Right ventricle myocardium inferior (tissue), 1 donor: ENCODE measurements at regions of chr18 and their contacts with region 1.

Region 1: GRCh38 chr18:13611601-13612195 is 114.7 kb downstream of the FAM210A start:
- DNase-seq: peak; percentile 78
- ATAC-seq: peak; percentile 88

Region 2: DNA sequence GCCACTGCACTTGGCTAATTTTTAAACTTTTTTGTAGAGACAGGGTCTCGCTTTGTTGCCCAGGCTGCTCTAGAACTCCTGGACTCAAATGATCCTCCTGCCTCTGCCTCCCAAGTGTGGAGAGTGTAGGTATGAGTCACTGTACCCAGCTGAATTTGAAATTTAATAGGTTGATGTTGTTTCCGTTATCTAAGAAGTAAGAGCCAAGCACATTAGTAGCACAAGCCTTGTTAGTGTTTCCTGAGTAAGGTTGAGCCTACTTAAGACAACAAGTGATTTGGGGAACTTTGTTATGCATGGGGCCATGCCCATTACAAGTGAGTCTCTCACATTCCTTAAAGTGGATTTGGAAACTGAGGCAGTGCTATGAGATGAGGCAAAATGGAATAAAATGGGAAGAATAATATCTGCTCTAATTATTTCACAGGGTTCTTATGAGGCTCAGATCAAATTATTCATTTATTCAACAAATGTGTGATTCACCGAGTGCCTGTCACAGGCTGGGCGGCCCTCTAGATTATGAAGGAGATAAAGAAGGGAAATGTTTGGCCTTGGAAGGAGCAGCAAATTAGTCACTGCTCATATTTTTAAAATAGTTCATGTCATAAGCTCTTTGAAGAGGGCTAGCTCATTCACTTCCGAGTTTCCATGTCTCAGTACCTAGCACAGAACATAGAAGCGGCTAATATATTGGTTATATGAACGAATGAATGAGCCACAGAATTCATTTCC is 175.9 kb before region 1 on chr18:
- intact Hi-C with region 1: no loop called
- DNase-seq: no peak
- ATAC-seq: no peak

Region 3: GRCh38 chr18:13565228-13565627 is 46.5 kb before region 1 on chr18:
- intact Hi-C with region 1: loop called (anchors 2 kb)
- DNase-seq: peak; percentile 80
- ATAC-seq: peak; percentile 91